ENCODE measurements at regions of chr2 and their contacts with region 1.

Region 1: DNA sequence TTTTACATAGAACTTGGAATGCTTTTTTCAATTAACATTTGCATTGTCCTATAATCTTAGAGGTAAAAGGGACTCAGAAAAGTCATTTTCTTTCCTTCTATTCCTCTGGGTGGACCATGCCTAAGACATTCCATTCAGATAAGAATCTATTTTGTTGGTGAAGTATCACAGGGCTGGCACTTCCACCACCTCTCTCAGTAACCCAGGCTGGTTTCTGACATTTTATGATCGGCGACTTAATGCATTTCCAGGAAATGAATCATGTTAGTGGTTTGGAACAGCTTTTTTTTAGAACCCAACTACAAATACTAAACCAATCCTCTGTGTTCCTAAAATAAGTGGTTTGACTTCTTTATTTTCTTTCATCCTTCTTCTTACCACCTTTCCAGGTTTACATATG is 27.0 kb downstream of the GAD1 start:
- DNase-seq: peak; percentile 79
- H3K4me3 ChIP-seq: peak overlapping the region; percentile 47
- H3K27ac ChIP-seq: peak overlapping the region; percentile 60
- H3K4me1 ChIP-seq: peaks cover 41% of the 10 kb centered on the region
- H3K27me3 ChIP-seq: no peaks in the 10 kb centered on the region

Region 2: DNA sequence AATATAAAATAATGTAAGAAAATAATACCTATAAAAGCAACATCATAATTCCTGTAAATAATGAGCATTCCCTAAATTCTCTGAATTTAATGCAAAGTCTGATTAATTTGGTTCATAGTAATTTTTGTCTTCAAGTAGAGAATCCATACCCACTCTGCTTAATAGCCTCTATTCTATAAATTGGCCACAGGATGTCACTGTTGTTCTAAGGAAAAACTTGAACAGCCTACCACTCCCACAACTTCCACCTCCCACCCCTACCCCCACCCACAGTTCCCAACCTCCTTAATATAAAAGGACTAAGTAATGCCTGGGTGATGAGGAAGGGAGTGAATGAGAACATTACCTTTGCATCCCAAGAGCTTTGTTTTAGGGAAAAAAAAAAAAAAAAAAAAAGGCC is 1391.6 kb before region 1 on chr2:
- in situ Hi-C with region 1: loop called (anchors 25 kb)
- DNase-seq: peak; percentile 63
- H3K4me3 ChIP-seq: no peak overlapping the region
- H3K27ac ChIP-seq: no peak overlapping the region
- H3K4me1 ChIP-seq: no peaks in the 10 kb centered on the region
- H3K27me3 ChIP-seq: no peaks in the 10 kb centered on the region

Region 3: DNA sequence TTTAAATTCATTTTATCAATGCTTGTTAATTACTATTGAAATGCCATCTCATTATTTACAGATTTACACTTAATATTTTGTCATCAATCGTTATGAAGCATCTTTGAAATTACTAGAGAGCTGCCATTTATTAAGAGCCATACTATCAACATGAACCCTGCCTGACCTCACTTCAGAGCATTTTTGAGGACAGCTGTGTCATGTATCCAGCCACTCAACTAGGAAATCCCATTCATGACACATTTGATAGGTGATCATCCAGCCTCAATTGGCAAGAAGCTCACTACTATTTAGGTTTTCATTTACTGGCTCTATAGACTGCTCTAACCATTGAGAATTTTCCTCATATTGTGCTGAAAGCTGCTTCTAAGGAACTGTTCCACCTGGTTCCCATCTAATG is 357.6 kb after region 1 on chr2:
- in situ Hi-C with region 1: no loop called
- DNase-seq: no peak
- H3K4me3 ChIP-seq: no peak overlapping the region
- H3K27ac ChIP-seq: no peak overlapping the region
- H3K4me1 ChIP-seq: no peaks in the 10 kb centered on the region
- H3K27me3 ChIP-seq: no peaks in the 10 kb centered on the region

Measured in GM23248 (cell line).